H1 (cell line): ENCODE measurements at regions of chr1 and their contacts with region 1.

Region 1: GRCh38 chr1:58003059-58003458 is 543.5 kb downstream of the OMA1 start:
- DNase-seq: no peak
- H3K4me3 ChIP-seq: no peak overlapping the region
- H3K27ac ChIP-seq: no peak overlapping the region
- H3K4me1 ChIP-seq: peaks cover 2 to 36% (median 32%) of the 10 kb centered on the region in 4 experiments; a peak in 5 of 7 replicates
- H3K27me3 ChIP-seq: no peaks in the 10 kb centered on the region
- CTCF ChIP-seq: no peak
- EP300 ChIP-seq: no peak
- POLR2A ChIP-seq: no peak
- RAD21 ChIP-seq: no peak

Region 2: DNA sequence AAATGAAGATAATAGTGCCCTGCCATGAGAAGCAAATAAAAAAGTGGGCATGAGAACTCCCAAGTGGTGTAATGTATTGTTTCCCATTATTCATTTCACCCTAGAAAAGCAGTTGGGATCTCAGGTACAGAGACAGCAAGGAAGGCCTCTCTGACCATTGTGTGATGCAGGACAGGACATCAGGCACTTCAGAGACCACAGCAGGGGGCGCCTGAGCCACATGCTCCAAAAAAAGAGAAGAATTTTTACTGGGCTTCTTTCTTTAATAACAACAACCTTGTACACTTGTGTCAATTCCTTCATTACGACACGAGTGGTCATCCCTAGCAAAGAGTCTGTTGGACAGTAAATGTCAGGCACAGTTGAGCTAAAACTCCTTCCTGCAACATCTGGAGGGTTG is 10.2 kb after region 1 on chr1:
- CTCF ChIA-PET with region 1: interaction called, 12 read pairs
- POLR2A ChIA-PET with region 1: no interaction called
- DNase-seq: no peak
- H3K4me3 ChIP-seq: no peak overlapping the region
- H3K27ac ChIP-seq: no peak overlapping the region
- H3K4me1 ChIP-seq: peaks cover 0 to 5% (median 0%) of the 10 kb centered on the region in 4 experiments; a peak in 2 of 7 replicates
- H3K27me3 ChIP-seq: no peaks in the 10 kb centered on the region
- CTCF ChIP-seq: peak in 2 of 3 experiments; percentile 16 to 22; a peak in 2 of 4 replicates
- EP300 ChIP-seq: no peak
- POLR2A ChIP-seq: no peak
- RAD21 ChIP-seq: peak; percentile 41 to 46